ENCODE measurements at regions of chr21 and their contacts with region 1.

Region 1: DNA sequence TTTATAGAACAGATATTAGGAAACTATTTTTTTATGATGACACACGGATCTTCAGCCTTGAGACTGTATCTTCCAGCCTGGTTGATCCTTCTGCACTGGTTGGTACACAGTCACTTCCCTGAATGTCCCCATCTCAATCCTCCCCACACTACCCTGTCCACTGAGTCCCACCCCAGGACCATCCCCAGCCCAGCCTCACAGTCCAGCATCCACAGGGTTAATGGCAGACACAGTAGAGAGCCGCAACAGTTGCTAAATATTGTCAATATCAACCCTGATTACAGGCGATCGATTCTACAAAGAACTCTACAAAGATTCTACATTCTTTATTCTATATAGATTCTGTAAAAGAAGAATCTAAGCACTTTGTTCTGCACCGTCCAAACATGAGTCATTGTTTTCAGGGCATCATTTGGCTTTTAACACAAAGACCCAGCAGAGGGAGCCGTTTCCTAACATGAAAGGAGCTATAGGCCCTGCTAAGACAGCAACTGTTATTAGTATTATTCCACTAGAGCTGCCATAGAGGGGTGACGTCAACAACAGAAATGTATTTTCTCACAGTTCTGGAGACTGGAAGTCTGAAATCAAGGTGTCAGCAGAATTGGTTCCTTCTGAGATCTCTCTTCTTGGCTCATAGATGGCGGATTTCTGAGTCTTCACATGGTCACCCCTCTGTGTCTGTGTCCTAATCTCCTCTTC is 30.1 kb upstream of the IFNAR2 start:
- DNase-seq: peak; percentile 72
- H3K4me3 ChIP-seq: no peak overlapping the region
- CTCF ChIP-seq: peak; percentile 66

Region 2: DNA sequence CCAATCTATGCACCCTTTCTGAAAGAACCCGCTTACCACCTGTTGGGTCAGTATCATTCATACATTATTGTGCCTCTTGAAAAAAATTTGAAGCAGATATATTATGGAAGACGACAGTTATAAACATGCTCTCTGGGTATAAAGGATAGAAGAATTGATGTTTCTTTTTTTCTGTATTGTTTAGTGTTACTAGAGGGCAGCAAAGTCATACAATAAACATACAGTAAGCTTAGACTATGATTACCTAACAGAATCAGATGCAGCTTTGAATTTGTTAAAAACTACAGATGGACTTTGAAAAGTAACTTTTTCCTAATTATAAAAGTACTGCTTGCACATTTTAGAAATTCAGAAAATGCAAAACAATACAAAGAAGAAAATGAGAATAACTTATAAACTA is 417.0 kb before region 1 on chr21:
- CTCF ChIA-PET with region 1: interaction called, 12 read pairs
- POLR2A ChIA-PET with region 1: no interaction called
- DNase-seq: no peak
- H3K4me3 ChIP-seq: no peak overlapping the region
- CTCF ChIP-seq: no peak

Region 3: DNA sequence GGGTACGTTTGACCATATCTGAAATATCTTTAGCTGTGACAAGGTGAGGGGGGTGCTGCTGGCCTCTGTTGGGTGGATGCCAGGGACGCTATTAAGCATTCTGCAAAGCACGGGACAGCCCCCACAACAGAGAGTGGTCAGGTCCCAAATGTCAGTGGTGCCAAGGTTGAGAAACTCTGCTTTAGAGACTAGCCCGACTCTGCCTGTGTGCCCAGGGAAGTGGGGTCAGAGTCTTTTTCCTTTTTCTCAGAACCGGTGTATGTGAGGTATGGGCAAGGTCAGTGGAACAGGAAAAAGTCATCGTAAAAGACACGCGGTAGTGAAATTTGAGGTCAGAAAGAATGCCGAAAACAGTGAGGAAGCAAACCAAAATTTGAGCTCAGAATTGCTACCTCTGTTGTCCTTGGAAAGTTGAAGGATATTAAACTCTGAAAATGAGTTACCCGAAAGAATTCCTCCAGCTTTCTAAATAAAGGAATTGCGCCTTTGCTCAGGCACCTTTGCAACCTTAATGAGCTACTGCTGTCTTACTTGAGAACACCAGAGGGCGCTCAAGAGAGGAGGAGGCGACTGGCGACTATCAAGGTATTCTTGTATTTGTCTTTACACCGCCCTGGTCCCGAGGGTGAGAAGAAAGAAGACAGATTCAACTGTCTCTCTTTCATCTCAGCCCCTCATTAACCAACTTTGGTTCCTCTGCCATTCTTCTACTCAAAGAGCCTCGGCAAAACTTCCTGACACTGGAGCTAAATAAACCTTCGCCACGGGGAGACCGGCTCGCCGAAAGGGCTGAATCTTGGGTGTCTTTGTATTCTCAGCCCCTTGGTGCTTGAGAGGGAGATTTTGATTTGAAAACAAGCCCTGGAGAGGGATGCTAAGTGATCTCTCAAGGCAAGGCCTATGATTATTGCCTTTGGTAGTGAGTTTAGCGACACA is 259.3 kb before region 1 on chr21:
- CTCF ChIA-PET with region 1: interaction called, 31 read pairs
- POLR2A ChIA-PET with region 1: no interaction called
- DNase-seq: no peak
- H3K4me3 ChIP-seq: no peak overlapping the region
- CTCF ChIP-seq: peak; percentile 70

Region 4: GRCh38 chr21:33033094-33033951 is 166.3 kb before region 1 on chr21:
- CTCF ChIA-PET with region 1: no interaction called
- POLR2A ChIA-PET with region 1: no interaction called
- DNase-seq: no peak
- H3K4me3 ChIP-seq: no peak overlapping the region
- CTCF ChIP-seq: no peak

Region 5: GRCh38 chr21:33219954-33220353 is 20.3 kb after region 1 on chr21:
- CTCF ChIA-PET with region 1: no interaction called
- POLR2A ChIA-PET with region 1: no interaction called
- DNase-seq: no peak
- H3K4me3 ChIP-seq: no peak overlapping the region
- CTCF ChIP-seq: no peak

Region 6: GRCh38 chr21:33360881-33361602 is 161.4 kb after region 1 on chr21:
- CTCF ChIA-PET with region 1: interaction called, 25 read pairs
- POLR2A ChIA-PET with region 1: no interaction called
- DNase-seq: peak; percentile 73
- H3K4me3 ChIP-seq: no peak overlapping the region
- CTCF ChIP-seq: peak; percentile 89

Region 7: GRCh38 chr21:33434770-33435360 is 235.2 kb after region 1 on chr21:
- CTCF ChIA-PET with region 1: interaction called, 46 read pairs
- POLR2A ChIA-PET with region 1: no interaction called
- DNase-seq: peak; percentile 79
- H3K4me3 ChIP-seq: no peak overlapping the region
- CTCF ChIP-seq: no peak